Endothelial cell of umbilical vein (primary cell): ENCODE measurements at regions of chr6 and their contacts with region 1.

Region 1: DNA sequence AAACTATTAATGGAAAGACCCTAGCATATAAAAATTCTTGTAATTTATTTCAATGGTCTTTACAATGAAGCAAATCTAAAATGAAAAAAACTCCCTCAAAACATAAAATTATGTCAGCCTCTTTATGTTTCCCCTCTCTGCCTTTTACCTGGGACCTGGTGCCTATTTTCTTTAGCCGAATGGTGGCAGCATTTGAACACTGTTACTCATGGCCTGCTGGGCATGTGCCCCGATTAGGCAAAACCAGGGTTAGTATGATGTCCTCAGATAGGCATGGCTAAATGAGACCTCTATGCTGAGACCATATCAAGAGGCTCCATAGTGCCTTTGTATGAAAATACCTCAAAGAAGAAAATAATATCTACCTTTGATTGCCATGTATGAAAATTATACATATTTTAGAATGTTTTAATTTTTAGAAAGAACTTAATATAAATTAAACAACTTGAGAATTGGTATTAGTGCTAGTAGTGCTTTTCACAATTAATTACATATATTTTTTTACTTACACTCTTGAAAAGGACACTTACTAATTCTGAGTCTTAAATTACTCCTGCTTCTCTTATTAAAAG is 22.5 kb upstream of the C6orf58 start:
- DNase-seq: peak; percentile 27
- H3K4me3 ChIP-seq: no peak overlapping the region
- H3K27ac ChIP-seq: no peak overlapping the region
- H3K4me1 ChIP-seq: no peaks in the 10 kb centered on the region
- H3K27me3 ChIP-seq: peaks cover 4 to 10% of the 10 kb centered on the region in 2 experiments
- CTCF ChIP-seq: peak in 1 of 2 donors; percentile 32
- POLR2A ChIP-seq: no peak

Region 2: DNA sequence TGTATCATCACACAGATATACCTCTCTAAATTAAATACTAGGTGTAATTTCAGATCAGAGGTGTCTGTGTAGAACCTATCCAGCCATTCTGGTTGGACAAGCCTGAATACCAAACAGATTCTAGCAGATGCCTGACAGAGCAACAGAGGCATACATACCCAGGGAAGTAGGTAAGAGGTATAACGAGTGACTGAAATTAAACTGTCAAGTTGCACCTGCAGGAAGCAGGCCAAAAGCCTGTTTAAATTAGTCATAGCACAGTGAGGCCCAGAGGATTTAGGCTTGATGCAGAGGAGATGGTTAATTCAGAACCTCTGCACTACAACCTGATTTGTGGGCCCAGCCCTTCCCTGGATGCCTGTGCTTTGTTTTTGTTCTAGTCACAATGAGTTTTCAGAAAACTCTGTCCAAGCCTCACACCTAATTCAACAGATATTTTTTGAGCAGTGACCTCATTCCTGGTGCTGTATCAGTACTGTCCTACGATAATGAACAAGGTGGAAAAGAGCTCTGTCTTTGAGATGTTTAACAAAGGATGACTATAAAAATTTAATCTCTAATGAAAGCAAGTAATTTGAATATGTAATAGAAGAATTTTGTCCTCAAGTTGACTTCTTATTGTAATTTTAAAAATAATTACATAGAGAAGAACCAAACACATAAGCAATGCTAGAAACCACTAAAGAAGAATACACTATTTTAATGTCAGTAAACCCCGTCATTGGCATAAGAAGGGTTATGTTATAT is 54.2 kb after region 1 on chr6:
- CTCF ChIA-PET with region 1: no interaction called
- POLR2A ChIA-PET with region 1: no interaction called
- dilution Hi-C with region 1: no loop called
- intact Hi-C with region 1: no loop called
- DNase-seq: no peak
- H3K4me3 ChIP-seq: no peak overlapping the region
- H3K27ac ChIP-seq: no peak overlapping the region
- H3K4me1 ChIP-seq: no peaks in the 10 kb centered on the region
- H3K27me3 ChIP-seq: peaks cover 0 to 3% of the 10 kb centered on the region in 2 experiments
- CTCF ChIP-seq: no peak
- POLR2A ChIP-seq: no peak

Region 3: DNA sequence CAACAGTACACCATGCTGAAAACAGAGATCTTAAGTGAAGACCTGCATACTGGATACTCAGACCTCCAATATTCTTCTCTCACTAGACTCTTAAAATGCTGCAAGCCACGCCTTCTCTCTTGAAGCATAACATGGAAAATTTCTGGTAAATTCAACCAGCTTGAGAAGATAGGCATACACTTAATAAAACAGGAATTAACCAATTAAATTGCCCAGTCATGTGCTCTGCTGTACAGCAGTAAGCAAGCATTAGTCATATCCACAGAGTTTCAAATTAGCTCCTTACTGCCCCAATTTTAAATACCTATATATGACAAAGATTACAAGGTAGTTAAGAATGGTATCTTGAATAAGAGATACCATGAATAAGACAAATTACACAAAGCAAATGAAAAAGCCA is 76.3 kb after region 1 on chr6:
- CTCF ChIA-PET with region 1: no interaction called
- POLR2A ChIA-PET with region 1: no interaction called
- dilution Hi-C with region 1: no loop called
- intact Hi-C with region 1: loop called (anchors 5 kb)
- DNase-seq: no peak
- H3K4me3 ChIP-seq: no peak overlapping the region
- H3K27ac ChIP-seq: no peak overlapping the region
- H3K4me1 ChIP-seq: no peaks in the 10 kb centered on the region
- H3K27me3 ChIP-seq: peaks cover 2 to 21% of the 10 kb centered on the region in 2 experiments
- CTCF ChIP-seq: no peak
- POLR2A ChIP-seq: no peak

Region 4: GRCh38 chr6:127690092-127690491 is 135.6 kb after region 1 on chr6:
- CTCF ChIA-PET with region 1: interaction called, 10 read pairs
- POLR2A ChIA-PET with region 1: no interaction called
- dilution Hi-C with region 1: no loop called
- intact Hi-C with region 1: no loop called
- DNase-seq: peak; percentile 3
- H3K4me3 ChIP-seq: no peak overlapping the region
- H3K27ac ChIP-seq: no peak overlapping the region
- H3K4me1 ChIP-seq: no peaks in the 10 kb centered on the region
- H3K27me3 ChIP-seq: peaks cover 2 to 4% of the 10 kb centered on the region in 2 experiments
- CTCF ChIP-seq: peak; percentile 5 to 10
- POLR2A ChIP-seq: no peak

Region 5: DNA sequence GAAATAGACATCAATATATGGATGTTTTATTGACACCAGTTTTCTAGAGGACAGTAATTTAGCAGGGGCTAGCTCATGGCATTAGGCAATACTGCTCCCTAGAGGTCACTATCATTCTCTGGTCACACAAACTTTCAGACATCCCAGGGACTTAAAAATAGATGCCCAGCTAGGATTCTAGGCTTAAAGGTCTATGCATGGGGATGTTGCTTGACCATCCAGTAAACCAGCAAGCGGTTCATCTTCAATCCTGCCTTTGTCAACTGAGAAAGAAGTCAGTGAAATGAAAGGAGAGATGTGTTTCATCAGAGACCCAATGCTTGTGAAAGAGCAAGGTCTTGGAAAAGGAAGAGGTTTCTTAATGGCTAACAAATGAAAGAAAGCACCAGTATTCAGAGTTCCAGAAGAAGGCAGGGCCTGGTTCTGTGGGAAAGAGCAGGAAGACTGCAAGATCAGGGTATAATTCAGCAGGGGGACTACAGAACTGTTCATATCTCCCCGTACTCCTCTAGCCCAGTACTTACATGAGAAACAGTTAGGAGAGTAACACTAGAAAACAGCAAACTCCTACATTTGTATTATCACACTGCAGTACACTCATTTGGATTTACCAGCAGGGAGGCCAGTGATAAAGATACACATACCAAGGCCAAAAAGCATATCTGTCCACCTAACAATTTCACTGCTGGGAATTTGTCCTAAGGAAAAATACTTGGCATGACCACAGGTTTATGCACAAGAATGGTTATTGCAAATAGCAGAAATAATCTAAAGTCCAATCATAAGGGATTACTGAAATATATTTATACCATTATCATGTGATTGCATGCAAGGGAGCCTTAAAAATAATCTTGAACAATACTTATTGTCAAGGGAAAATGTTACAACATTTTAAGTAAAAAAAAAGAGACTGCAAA is 1177.0 kb after region 1 on chr6:
- CTCF ChIA-PET with region 1: no interaction called
- POLR2A ChIA-PET with region 1: no interaction called
- dilution Hi-C with region 1: no loop called
- intact Hi-C with region 1: loop called (anchors 2 kb)
- DNase-seq: peak; percentile 69
- H3K4me3 ChIP-seq: no peak overlapping the region
- H3K27ac ChIP-seq: no peak overlapping the region
- H3K4me1 ChIP-seq: no peaks in the 10 kb centered on the region
- H3K27me3 ChIP-seq: peaks cover 0 to 5% of the 10 kb centered on the region in 2 experiments
- CTCF ChIP-seq: peak; percentile 51 to 68
- POLR2A ChIP-seq: no peak